ENCODE measurements at regions of chr14 and their contacts with region 1.

Region 1: GRCh38 chr14:22472935-22473854 is 115.8 kb downstream of the DAD1 start:
- DNase-seq: no peak
- H3K4me3 Mint-ChIP-seq: no peak overlapping the region
- H3K27ac Mint-ChIP-seq: no peak overlapping the region
- H3K4me1 Mint-ChIP-seq: no peaks in the 10 kb centered on the region
- H3K27me3 Mint-ChIP-seq: no peaks in the 10 kb centered on the region

Region 2: GRCh38 chr14:22386924-22387775 is 86.0 kb before region 1 on chr14:
- intact Hi-C with region 1: loop called (anchors 10 kb)
- DNase-seq: no peak
- H3K4me3 Mint-ChIP-seq: no peak overlapping the region
- H3K27ac Mint-ChIP-seq: no peak overlapping the region
- H3K4me1 Mint-ChIP-seq: no peaks in the 10 kb centered on the region
- H3K27me3 Mint-ChIP-seq: no peaks in the 10 kb centered on the region

Region 3: GRCh38 chr14:22822571-22823098 is 349.4 kb after region 1 on chr14:
- intact Hi-C with region 1: no loop called
- DNase-seq: peak; percentile 47
- H3K4me3 Mint-ChIP-seq: peak overlapping the region; percentile 62
- H3K27ac Mint-ChIP-seq: no peak overlapping the region
- H3K4me1 Mint-ChIP-seq: peaks cover 24% of the 10 kb centered on the region
- H3K27me3 Mint-ChIP-seq: peaks cover 19% of the 10 kb centered on the region

Measured in activated T-helper 2 cell treated with anti-CD3 and anti-CD28 coated beads, Interferon-gamma antibody, Interleukin-2, Interleukin-4, amounts not matched to agents 10 μg/mL and 5 μg/mL and 100 μg/mL, durations not matched to agents 14 hours and 24 hours and 36 hours (primary cell).